ENCODE measurements at regions of chr2 and their contacts with region 1.

Region 1: DNA sequence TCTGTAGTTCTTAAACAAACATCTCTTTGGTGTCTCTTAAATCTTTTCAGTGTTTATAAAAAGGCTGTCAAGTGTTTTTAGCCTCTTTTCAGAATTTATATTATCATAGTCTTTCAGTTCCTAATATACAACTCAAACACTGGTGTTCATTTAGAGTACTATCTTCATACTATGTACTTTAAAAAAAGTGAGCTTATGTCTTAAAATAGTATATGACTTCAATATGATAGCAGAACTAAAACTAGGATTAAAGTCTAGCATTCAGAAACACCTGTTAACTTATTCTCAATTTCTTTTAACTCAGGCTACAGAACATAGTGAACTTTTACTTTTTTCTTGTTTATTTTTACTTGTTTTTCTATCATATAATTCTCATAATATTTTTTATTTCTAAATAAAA is 14.7 kb upstream of the IKZF2 start:
- DNase-seq: no peak
- ATAC-seq: no peak
- H3K4me3 ChIP-seq: no peak overlapping the region
- H3K27ac ChIP-seq: no peak overlapping the region
- H3K4me1 ChIP-seq: peaks cover 0 to 5% of the 10 kb centered on the region in 2 donors
- H3K27me3 ChIP-seq: no peaks in the 10 kb centered on the region
- CTCF ChIP-seq: no peak
- POLR2A ChIP-seq: no peak

Region 2: GRCh38 chr2:212686285-212686895 is 479.7 kb before region 1 on chr2:
- in situ Hi-C with region 1: loop called in 1 of 4 experiments (anchors 10 kb)
- intact Hi-C with region 1: no loop called
- DNase-seq: peak; percentile 15 to 31
- ATAC-seq: no peak
- H3K4me3 ChIP-seq: peak overlapping the region in 1 of 4 donors; percentile 4
- H3K27ac ChIP-seq: no peak overlapping the region
- H3K4me1 ChIP-seq: no peaks in the 10 kb centered on the region
- H3K27me3 ChIP-seq: no peaks in the 10 kb centered on the region
- CTCF ChIP-seq: peak; percentile 51 to 83 (median 59)
- POLR2A ChIP-seq: no peak

Region 3: GRCh38 chr2:212770240-212770639 is 395.9 kb before region 1 on chr2:
- in situ Hi-C with region 1: loop called in 1 of 4 experiments (anchors 5 kb)
- intact Hi-C with region 1: no loop called
- DNase-seq: no peak
- ATAC-seq: no peak
- H3K4me3 ChIP-seq: no peak overlapping the region
- H3K27ac ChIP-seq: no peak overlapping the region
- H3K4me1 ChIP-seq: no peaks in the 10 kb centered on the region
- H3K27me3 ChIP-seq: no peaks in the 10 kb centered on the region
- CTCF ChIP-seq: no peak
- POLR2A ChIP-seq: no peak

Region 4: DNA sequence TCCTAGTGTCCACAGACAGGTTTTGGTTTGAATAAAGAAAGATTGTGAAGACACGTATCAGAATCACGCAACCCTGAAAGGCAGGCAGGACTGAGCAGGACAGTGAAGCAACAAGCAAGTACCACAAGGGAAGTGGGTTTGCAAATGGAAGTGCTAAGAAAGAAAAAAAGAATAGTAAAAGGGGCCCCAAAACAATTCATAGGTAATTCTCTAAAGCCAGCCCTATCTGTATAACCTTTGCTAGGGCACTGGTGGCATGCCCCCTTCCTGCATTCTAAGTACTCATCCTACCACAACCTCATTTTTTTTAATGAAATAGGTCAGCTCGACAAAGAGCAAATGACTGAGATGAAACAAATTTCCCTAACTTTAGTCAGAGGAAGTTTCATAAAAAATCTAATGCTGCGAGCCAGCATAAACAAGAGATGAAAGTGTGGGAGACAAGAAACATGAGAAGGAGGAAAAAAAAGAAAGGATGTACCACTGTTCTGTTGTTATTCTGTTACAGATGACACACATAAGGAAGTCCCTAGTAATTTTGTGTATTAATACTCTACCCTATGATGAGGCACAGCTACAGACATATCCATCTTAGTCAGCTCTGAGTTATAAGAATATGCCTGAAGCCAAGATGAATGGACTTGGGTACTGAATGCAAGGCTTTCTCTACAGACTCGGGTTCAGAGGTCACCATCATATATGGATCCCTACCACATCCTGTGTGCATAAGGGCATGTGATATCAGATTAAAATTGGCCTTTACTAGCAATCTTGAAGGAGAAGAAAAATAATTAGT is 46.9 kb before region 1 on chr2:
- in situ Hi-C with region 1: no loop called
- intact Hi-C with region 1: no loop called
- DNase-seq: no peak
- ATAC-seq: peak; percentile 36 to 38
- H3K4me3 ChIP-seq: no peak overlapping the region
- H3K27ac ChIP-seq: no peak overlapping the region
- H3K4me1 ChIP-seq: peaks cover 40 to 57% of the 10 kb centered on the region in 2 donors
- H3K27me3 ChIP-seq: no peaks in the 10 kb centered on the region
- CTCF ChIP-seq: no peak
- POLR2A ChIP-seq: no peak

Measured in gastrocnemius medialis (tissue), 4 donors.